Cardiac septum (tissue), 1 donor: ENCODE measurements at regions of chr12 and their contacts with region 1.

Region 1: GRCh38 chr12:751192-751998 is 984 bp upstream of the WNK1 start:
- DNase-seq: peak; percentile 96

Region 2: GRCh38 chr12:575948-576612 is 175.3 kb before region 1 on chr12:
- intact Hi-C with region 1: loop called (anchors 1 kb)
- DNase-seq: peak; percentile 94

Region 3: DNA sequence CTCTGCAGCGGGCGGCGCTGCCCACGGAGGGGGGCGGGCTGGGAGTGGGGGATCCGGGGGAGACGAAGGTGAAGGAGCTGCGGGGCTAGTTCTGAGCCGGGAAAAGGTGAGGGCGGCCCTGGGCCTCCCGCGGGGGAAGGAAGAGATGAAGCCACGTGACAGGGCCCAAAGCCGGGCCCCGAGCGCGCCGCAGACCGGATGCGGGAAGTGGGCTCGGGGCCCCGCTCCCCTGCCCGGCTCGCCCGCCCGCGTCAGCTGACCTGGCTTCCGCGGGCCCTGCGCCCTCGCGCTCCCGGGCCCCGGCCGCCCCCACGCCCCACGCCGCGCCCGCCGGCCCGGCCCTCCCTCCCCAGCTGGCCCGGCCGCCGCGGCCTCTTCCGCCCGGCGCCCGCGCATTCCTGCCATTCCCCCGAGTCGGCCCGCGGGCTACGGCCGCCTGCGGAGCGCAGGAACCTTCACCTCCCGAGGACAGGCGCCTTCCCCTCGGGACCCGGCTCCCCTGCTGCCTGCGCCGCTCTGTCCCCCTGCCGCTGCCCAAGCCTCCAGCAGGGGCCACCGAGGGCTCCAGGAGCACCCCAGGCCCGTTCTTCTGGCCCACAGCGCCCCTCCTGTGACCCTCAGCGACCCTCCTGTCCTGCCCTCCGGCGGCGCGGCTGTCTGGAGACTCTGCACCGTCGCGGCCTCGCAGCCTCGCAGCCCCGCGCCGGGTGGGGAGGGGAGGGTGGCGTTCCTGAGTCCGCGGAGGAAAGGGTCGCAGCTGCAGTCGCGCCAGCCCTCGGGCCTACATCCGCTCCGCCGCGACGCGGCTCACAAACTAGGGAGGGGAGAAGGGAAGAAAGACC is 108.5 kb before region 1 on chr12:
- intact Hi-C with region 1: loop called (anchors 2 kb)
- DNase-seq: peak; percentile 93

Region 4: DNA sequence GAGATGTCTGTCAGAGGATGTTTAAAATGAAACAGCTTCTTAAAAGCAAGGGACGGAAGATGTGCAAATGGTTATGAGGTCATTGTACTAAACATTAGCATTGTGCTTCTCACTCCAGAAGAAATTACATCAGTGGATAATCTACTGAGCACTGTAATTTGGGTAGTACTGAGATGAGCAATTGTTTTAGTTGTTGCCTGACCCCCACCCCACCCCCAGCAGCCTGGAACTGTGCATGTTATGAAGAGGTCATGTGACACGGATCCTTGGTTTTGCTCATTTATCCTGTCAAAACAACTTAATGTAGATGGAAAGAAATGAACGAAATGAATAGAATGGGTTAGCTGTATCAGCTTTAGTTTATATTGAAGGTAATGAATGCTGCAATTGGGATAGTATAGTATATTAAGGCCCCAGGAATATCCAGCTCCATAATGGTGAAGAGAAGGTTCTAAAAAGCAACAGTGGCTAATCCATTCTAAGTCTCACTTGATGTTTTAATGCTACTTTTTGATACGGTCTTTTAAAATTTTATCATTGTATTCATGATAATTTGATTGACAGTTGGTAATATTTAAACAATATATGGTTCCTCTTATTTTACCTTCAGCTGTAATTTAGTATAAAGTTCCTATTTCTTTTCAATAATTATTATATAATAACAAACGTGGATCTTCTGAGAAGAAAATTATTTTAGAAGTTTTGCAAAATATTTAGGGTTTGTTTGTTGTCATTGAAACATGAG is 59.4 kb after region 1 on chr12:
- intact Hi-C with region 1: loop called (anchors 5 kb)
- DNase-seq: no peak

Region 5: GRCh38 chr12:879641-880040 is 128.2 kb after region 1 on chr12:
- intact Hi-C with region 1: no loop called
- DNase-seq: no peak

Region 6: DNA sequence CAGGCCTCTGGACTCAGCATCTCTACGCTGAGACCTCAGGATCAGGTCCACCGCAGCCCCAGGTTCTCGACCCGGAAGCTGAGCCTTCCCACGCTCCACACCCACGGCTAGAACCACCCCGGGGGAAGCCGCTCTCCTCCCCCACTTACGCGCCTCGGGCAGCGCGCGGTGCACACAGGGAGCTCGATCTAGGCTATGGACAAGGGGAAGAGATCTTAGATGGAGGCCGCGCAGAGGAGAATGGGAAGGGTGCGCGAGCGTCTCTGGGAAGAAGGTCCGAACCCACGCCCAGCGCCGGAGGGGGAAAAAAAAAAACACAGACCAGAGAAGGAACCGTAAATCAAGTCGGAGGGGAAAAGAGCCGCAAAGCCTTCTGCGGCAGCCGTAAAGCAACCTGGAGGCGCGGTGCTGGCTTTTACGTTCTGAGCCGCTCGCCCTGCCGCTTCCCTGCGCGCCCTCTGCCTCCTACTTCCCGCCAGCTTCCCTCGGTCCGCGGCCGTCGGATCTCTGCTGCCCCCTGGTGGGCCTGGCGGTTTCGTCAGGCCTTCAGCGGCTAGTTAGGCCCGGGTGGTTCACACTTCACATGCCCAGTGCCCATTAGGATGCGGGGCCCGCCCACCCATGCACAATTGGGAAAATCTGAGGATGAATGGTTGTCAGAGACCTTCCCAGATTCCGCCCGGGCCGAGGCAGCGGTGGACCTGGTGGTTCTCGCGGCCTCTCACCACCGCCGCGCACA is 198.2 kb after region 1 on chr12 and contains the start of gene RAD52:
- intact Hi-C with region 1: loop called (anchors 2 kb)
- DNase-seq: peak; percentile 99
- total RNA-seq, gene RAD52: 9.2 TPM

Region 7: DNA sequence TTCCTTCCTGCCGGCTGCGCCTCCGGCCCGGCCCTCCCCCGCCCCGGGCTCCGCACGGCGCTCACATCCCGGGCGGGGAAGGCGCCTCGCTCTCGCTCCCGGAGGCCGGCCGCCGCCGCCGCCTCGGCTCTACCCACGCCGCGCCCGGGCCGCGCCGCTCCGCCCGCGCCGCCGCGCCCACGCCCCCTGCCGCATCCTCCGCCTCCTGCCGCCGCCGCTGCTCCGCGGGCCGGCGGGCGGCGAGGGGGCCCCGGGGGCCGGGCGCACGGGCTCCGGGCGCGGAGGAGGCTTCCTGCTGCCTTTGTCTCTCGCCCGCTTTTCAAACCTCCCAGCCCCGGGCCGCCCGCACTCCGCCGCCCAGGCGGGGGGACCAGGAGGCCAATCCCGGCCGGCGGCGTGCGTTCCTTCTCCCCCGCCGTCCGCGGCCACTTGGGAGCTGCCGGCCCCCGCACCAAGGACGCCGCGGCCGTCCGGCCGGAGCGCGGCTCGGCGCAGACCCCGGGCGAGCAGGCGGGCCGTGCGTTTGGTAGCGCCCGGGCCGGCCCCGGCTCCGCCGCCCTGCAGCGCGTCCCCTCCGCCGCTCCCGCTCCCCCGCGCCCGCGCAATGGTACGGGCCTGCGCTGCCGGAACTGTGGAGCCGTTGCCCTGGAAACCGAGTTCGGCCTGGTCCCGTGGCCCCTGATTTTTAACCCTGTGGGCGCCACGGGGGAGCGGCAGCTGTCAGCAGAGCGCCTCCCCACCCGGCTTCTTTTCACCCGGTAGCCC is 843.0 kb after region 1 on chr12 and contains the start of gene FBXL14:
- intact Hi-C with region 1: loop called (anchors 10 kb)
- DNase-seq: peak; percentile 93
- total RNA-seq, gene FBXL14: 6.9 TPM